Activated naive CD4-positive, alpha-beta T cell treated with anti-CD3 and anti-CD28 coated beads, Interleukin-2, amount 10 ng/mL, durations not matched to agents 7 days and 5 days (primary cell): ENCODE measurements at regions of chr7 and their contacts with region 1.

Region 1: GRCh38 chr7:152347888-152348287 is 87.9 kb downstream of the KMT2C start:
- DNase-seq: no peak
- H3K4me3 Mint-ChIP-seq: no peak overlapping the region
- H3K27ac Mint-ChIP-seq: no peak overlapping the region
- H3K4me1 Mint-ChIP-seq: no peaks in the 10 kb centered on the region
- H3K27me3 Mint-ChIP-seq: no peaks in the 10 kb centered on the region

Region 2: DNA sequence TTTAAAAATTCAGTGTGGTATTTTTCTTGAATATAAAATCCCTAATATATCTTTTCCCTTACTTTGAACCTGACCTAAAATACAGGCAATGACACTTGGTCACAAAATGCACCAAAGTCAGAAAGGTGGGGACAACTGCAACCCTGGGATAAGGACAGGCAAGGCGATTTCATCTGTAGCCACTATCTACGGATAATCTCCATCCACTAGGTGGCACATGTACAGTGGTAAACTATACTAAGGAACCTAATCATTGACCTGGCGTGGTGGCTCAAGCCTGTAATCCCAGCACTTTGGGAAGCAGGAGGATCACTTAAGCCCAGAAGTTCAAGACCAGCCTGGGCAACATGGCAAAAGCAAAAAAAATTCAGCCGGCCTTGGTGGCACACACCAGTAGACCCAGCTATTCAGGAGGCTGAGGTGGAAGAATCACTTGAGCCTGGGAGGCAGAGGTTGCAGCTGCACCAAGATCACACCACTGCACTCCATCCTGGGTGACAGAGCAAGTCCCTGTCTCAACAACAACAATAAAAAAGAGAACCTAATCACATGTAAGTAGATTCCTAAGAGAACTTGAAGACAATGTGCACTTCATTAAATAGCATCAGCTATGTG is 11.0 kb before region 1 on chr7:
- CTCF ChIA-PET with region 1: interaction called, 14 read pairs
- DNase-seq: no peak
- H3K4me3 Mint-ChIP-seq: peak overlapping the region; percentile 59
- H3K27ac Mint-ChIP-seq: peak overlapping the region; percentile 92
- H3K4me1 Mint-ChIP-seq: peaks cover 29% of the 10 kb centered on the region
- H3K27me3 Mint-ChIP-seq: no peaks in the 10 kb centered on the region